ENCODE measurements at regions of chr15 and their contacts with region 1.

Region 1: GRCh38 chr15:78308422-78309032 is 9.1 kb upstream of the SKIC8 start:
- DNase-seq: peak; percentile 66
- ATAC-seq: peak; percentile 83 to 85

Region 2: GRCh38 chr15:78241007-78241406 is 67.5 kb before region 1 on chr15:
- intact Hi-C with region 1: no loop called
- DNase-seq: peak; percentile 85
- ATAC-seq: peak; percentile 94 to 97

Region 3: GRCh38 chr15:78422571-78423340 is 114.2 kb after region 1 on chr15:
- intact Hi-C with region 1: loop called (anchors 2 to 5 kb)
- DNase-seq: peak; percentile 55
- ATAC-seq: peak; percentile 65 to 73

Region 4: DNA sequence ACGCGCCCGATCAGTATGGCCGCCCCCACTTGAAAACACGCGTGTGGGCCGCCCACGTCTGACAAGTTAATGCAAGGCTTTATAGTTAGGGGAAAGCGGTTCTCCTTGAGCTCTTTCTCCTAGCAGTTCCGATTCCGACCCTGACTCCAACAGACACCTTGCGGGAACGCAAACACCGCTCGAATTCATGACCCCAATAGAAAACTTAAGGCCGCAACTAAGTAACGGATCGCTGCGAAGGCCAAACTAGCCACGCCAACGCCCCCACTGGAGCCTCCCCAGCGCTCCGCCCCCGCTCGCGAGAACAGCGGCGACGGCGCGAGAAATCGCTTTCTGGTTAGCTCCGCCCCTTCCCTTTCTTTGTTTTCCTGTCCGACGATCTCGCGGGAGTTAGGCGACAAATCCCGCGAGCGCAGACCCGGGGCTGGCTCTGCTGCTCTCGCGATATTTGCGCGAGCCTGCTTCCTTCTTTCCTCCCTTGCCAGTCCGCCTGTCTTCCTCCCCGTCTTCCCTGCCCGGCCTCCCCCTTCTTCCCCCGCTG is 129.3 kb after region 1 on chr15 and contains the start of gene IREB2:
- intact Hi-C with region 1: no loop called
- DNase-seq: peak; percentile 97
- ATAC-seq: peak; percentile 96 to 97
- total RNA-seq, gene IREB2: 29.5 to 31.0 TPM

Region 5: DNA sequence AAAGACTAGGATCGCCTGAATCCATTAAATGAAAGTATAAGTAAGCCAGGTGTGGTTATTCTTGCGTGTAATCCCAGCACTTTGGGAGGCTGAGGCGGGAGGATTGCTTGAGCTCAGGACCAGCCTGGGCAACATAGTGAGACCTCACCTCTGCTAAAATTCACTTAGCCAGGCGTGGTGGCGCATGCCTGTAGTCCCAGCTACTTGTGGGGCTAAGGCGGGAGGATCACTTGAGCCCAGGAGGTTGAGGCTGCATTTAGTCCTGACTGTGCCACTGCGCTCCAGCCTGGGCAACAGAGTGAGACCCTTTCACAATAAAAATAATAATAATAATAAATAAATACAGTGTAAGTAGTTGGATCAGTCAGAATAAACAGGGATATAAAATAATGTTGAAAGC is 173.4 kb after region 1 on chr15:
- intact Hi-C with region 1: loop called in 1 of 2 experiments (anchors 5 kb)
- DNase-seq: no peak
- ATAC-seq: no peak

Region 6: DNA sequence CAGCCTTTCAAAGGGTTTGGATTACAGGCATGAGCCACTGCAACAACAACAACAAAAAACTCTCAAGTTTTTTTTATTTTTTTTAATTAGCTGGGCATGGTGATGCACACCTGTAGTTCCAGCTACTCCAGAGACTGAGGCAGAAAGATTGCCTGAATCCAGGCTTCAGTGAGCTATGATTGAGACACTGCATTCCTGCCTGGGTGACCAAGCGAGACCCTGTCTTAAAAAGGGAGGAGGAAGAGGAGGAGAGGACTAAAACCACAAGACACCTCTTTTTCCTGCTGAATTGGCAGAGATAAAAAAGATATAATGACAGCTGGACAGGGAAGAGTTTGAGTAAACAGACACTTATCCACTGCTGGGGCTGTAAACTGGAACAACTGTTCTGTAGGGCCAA is 355.2 kb after region 1 on chr15:
- intact Hi-C with region 1: no loop called
- DNase-seq: no peak
- ATAC-seq: no peak